ENCODE measurements at regions of chr15 and their contacts with region 1.

Region 1: GRCh38 chr15:92909131-92909781 is 9.1 kb downstream of the CHD2 start:
- DNase-seq: no peak
- ATAC-seq: no peak
- H3K4me3 ChIP-seq: no peak overlapping the region
- H3K27ac ChIP-seq: peak overlapping the region; percentile 99
- H3K4me1 ChIP-seq: peaks cover 89% of the 10 kb centered on the region
- H3K27me3 ChIP-seq: no peaks in the 10 kb centered on the region
- CTCF ChIP-seq: no peak

Region 2: GRCh38 chr15:92162657-92163056 is 746.6 kb before region 1 on chr15:
- CTCF ChIA-PET with region 1: interaction called, 14 read pairs
- POLR2A ChIA-PET with region 1: no interaction called
- in situ Hi-C with region 1: no loop called
- intact Hi-C with region 1: no loop called
- DNase-seq: no peak
- ATAC-seq: no peak
- H3K4me3 ChIP-seq: no peak overlapping the region
- H3K27ac ChIP-seq: no peak overlapping the region
- H3K4me1 ChIP-seq: no peaks in the 10 kb centered on the region
- H3K27me3 ChIP-seq: no peaks in the 10 kb centered on the region
- CTCF ChIP-seq: no peak